ENCODE measurements at regions of chr1 and their contacts with region 1.

Region 1: DNA sequence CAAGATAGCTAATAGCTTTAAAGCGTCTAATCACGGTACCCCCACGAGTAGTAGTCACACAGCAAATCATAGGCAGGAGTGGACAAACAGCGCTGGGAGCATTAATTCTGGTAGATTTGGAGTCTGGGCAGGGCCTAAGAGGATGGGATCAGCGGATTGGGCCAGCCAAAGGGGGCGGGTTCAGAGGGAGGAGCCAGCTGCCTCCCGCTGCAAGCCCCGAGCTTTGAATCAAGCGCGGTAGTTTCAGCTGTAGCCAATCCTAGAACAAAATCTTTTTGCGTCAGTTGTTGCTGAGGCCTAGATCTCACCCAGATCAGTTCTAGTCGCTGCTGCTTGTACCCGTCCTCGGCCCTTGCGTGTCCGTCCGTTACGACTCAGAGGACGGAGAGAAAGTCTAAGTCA is 576 bp upstream of the NASP start:
- DNase-seq: peak; percentile 95
- H3K4me3 ChIP-seq: peak overlapping the region; percentile 93 to 99
- H3K27ac ChIP-seq: peak overlapping the region; percentile 94 to 95
- H3K4me1 ChIP-seq: peaks cover 10% of the 10 kb centered on the region
- H3K27me3 ChIP-seq: no peaks in the 10 kb centered on the region
- CTCF ChIP-seq: no peak
- POLR2A ChIP-seq: no peak

Region 2: DNA sequence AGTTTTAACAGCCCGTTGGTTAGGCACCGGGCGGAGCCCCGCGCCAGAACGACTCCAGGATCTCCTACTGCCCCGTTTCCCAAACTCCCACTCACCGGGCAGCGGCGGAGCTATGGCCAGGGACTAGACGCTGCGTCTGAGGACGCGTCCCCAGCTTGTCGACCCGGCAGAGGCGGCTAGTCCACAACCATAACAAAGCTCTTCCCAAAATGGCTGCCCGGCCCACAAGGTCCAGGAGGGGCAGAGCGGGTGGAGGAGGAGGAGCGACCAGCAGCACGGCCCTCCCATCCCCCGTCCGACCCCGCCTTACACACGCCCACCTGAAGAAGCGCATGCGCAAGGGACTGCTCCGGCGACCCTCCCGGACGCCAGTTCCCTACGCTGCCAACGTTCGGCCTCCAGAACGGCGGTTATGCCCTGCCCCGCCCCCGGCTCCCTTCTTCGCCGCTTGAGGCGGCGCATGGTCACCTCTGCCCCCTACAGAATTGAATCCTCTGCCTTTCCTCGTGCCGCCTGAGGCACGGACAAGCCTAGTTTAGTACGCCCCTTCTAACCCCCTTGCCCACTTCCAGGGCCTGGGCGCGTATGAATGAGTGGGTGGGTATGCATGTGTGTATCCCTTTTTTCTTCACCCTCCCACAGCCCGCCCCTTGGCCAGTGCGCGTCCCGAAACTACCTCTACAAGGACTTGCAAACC is 103.2 kb after region 1 on chr1 and contains the start of gene GPBP1L1:
- intact Hi-C with region 1: loop called (anchors 5 kb)
- DNase-seq: peak; percentile 98
- H3K4me3 ChIP-seq: peak within 1 kb of the TSS; percentile 60 to 87
- H3K27ac ChIP-seq: peak within 1 kb of the TSS; percentile 94 to 98
- H3K4me1 ChIP-seq: peaks cover 5% of the 10 kb centered on the region
- H3K27me3 ChIP-seq: no peaks in the 10 kb centered on the region
- CTCF ChIP-seq: peak in 1 of 4 experiments; percentile 29
- POLR2A ChIP-seq: peak; percentile 86
- total RNA-seq, gene GPBP1L1: 120 to 153 TPM